HepG2 (cell line): ENCODE measurements at regions of chr3 and their contacts with region 1.

Region 1: DNA sequence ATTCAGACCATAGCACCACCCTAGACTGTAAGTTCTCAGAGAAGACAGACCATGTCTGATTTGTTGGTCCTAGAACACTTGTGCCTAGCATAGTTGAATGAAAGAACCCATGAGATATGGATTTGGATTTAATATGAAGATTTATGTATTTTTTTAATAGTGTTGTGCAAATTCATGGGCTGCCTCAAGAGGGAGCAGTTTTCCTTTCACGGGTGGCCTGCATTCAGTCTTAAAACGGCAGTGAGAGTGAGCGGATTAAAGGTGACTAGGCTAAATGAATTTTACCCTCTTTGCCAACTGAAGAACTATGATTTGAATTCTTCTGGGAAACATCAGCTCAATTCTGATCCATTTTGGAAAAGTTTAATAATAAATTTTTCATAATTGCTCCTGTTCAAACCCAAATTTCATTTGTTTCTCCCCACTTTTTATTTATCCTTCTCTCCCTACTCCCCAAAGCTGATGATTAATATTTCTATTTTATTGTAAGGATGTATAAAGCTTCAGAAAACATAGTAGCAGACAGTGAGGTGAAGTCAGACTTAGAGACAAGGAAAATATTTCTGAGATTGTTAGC is 67.3 kb downstream of the MORC1 start:
- DNase-seq: peak; percentile 3
- ATAC-seq: peak; percentile 47
- H3K4me3 ChIP-seq: no peak overlapping the region
- H3K27ac ChIP-seq: no peak overlapping the region
- H3K4me1 ChIP-seq: no peaks in the 10 kb centered on the region
- H3K27me3 ChIP-seq: no peaks in the 10 kb centered on the region
- CTCF ChIP-seq: peak; percentile 51
- EP300 ChIP-seq: no peak
- POLR2A ChIP-seq: no peak
- RAD21 ChIP-seq: no peak

Region 2: GRCh38 chr3:109023656-109024254 is 26.9 kb before region 1 on chr3:
- CTCF ChIA-PET with region 1: no interaction called
- POLR2A ChIA-PET with region 1: no interaction called
- in situ Hi-C with region 1: no loop called
- intact Hi-C with region 1: loop called (anchors 1 kb)
- DNase-seq: peak; percentile 25
- ATAC-seq: peak; percentile 61; the same call in 2 of the 3 replicates
- H3K4me3 ChIP-seq: no peak overlapping the region
- H3K27ac ChIP-seq: no peak overlapping the region
- H3K4me1 ChIP-seq: no peaks in the 10 kb centered on the region
- H3K27me3 ChIP-seq: no peaks in the 10 kb centered on the region
- CTCF ChIP-seq: peak; percentile 67
- EP300 ChIP-seq: no peak
- POLR2A ChIP-seq: no peak
- RAD21 ChIP-seq: no peak

Region 3: DNA sequence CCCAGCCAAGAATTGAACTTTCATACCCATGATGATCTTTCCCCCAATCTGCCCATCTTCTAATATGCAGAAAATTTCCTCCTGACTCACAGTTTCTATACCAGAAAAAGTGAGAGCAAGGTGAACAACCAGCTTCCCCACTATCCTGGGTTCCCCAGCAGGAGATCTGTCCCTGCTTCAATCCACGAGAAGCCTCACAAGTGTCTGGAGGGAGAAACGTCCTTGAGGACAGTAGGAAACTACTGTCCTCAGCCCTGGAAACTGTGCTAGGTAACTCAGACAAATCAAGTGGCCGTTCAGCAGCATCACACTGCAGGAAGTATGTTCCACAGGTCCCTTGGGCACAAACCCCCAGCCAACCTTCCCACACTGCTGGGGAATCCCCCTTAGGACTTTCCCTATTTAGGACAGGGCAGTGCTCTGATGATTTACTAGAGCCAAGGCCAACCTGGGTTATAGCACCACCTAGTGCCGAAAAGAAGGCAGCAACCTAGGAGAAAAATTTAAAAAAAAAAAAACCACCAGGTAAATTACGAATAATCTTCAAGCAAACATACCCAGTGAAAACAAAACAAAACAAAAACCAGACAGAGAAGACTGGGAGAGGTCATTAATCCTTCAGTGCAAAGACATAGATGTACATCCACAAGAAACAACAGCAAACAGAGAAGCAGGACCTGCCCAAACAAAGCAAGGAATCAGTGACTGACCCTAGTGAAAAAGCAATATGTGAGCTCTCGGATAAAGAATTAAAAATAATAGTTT is 31.2 kb after region 1 on chr3:
- CTCF ChIA-PET with region 1: interaction called, 5 read pairs
- POLR2A ChIA-PET with region 1: no interaction called
- in situ Hi-C with region 1: no loop called
- intact Hi-C with region 1: loop called (anchors 1 kb)
- DNase-seq: peak; percentile 31
- ATAC-seq: peak; percentile 91
- H3K4me3 ChIP-seq: no peak overlapping the region
- H3K27ac ChIP-seq: no peak overlapping the region
- H3K4me1 ChIP-seq: no peaks in the 10 kb centered on the region
- H3K27me3 ChIP-seq: no peaks in the 10 kb centered on the region
- CTCF ChIP-seq: peak; percentile 71
- EP300 ChIP-seq: no peak
- POLR2A ChIP-seq: no peak
- RAD21 ChIP-seq: no peak

Region 4: GRCh38 chr3:109224333-109224732 is 173.7 kb after region 1 on chr3:
- CTCF ChIA-PET with region 1: interaction called, 3 read pairs
- POLR2A ChIA-PET with region 1: no interaction called
- in situ Hi-C with region 1: no loop called
- intact Hi-C with region 1: loop called (anchors 1 kb)
- DNase-seq: peak; percentile 12
- ATAC-seq: peak; percentile 92
- H3K4me3 ChIP-seq: no peak overlapping the region
- H3K27ac ChIP-seq: no peak overlapping the region
- H3K4me1 ChIP-seq: no peaks in the 10 kb centered on the region
- H3K27me3 ChIP-seq: no peaks in the 10 kb centered on the region
- CTCF ChIP-seq: peak; percentile 72
- EP300 ChIP-seq: no peak
- POLR2A ChIP-seq: no peak
- RAD21 ChIP-seq: no peak